CD8-positive, alpha-beta T cell (primary cell): ENCODE measurements at regions of chr7 and their contacts with region 1.

Region 1: DNA sequence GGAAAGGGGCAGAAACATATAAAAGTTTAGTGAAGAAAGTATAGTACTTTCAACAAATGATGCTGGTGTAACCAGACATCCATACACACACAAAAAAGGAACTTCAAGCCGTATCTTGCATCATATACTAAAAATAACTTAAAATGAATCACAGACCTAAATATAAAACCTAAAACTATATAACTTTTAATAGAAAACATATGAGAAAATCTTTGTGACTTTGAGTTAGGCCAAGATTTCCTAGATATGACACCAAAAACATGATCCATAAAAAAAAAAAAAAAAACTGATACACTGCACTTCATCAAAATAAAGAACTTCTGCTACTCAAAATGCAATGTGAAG is 40.9 kb downstream of the NUDCD3 start:
- DNase-seq: no peak
- ATAC-seq: no peak
- H3K4me3 ChIP-seq: no peak overlapping the region
- H3K4me3 Mint-ChIP-seq: no peak overlapping the region
- H3K27ac ChIP-seq: no peak overlapping the region
- H3K27ac Mint-ChIP-seq: peak overlapping the region; percentile 3
- H3K4me1 ChIP-seq: peaks cover 4% of the 10 kb centered on the region
- H3K4me1 Mint-ChIP-seq: peaks cover 71% of the 10 kb centered on the region
- H3K27me3 ChIP-seq: no peaks in the 10 kb centered on the region
- H3K27me3 Mint-ChIP-seq: no peaks in the 10 kb centered on the region
- CTCF ChIP-seq: no peak

Region 2: GRCh38 chr7:44333911-44334733 is 115.4 kb before region 1 on chr7:
- CTCF ChIA-PET with region 1: no interaction called
- POLR2A ChIA-PET with region 1: no interaction called
- intact Hi-C with region 1: no loop called
- DNase-seq: no peak
- ATAC-seq: no peak
- H3K4me3 ChIP-seq: no peak overlapping the region
- H3K4me3 Mint-ChIP-seq: no peak overlapping the region
- H3K27ac ChIP-seq: no peak overlapping the region
- H3K27ac Mint-ChIP-seq: no peak overlapping the region
- H3K4me1 ChIP-seq: no peaks in the 10 kb centered on the region
- H3K4me1 Mint-ChIP-seq: no peaks in the 10 kb centered on the region
- H3K27me3 ChIP-seq: no peaks in the 10 kb centered on the region
- H3K27me3 Mint-ChIP-seq: no peaks in the 10 kb centered on the region
- CTCF ChIP-seq: no peak

Region 3: DNA sequence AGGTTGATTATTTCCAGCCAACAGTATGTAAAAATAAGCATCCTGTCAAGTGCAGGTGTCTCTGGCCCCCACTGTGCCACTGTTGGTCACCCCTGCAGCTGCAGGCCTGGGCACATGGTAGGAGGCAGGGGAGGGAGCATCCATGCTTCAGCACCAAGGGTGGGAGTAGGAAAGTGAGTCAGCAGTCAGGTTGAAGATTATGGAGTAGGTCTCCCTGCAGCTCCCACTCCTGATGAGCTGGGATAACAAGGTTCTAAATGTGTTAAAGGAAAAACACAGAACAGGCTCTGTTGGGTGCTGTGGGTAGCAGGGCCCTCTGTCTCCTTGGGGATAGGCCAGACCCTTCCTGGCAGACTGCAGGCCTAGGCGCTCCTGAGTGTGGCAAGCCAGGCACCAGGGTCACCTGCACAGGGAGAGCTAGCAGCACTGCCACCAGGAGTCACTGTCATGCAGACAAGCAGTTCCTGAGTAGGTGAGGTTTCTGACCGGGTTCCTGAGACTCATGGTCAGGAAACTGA is 18.4 kb before region 1 on chr7:
- CTCF ChIA-PET with region 1: interaction called, 4 read pairs
- POLR2A ChIA-PET with region 1: no interaction called
- intact Hi-C with region 1: loop called in 1 of 2 experiments (anchors 2 kb)
- DNase-seq: peak in 6 of 9 experiments; percentile 7 to 54 (median 40)
- ATAC-seq: peak; percentile 56
- H3K4me3 ChIP-seq: no peak overlapping the region
- H3K4me3 Mint-ChIP-seq: no peak overlapping the region
- H3K27ac ChIP-seq: no peak overlapping the region
- H3K27ac Mint-ChIP-seq: peak overlapping the region; percentile 89
- H3K4me1 ChIP-seq: no peaks in the 10 kb centered on the region
- H3K4me1 Mint-ChIP-seq: peaks cover 53% of the 10 kb centered on the region
- H3K27me3 ChIP-seq: no peaks in the 10 kb centered on the region
- H3K27me3 Mint-ChIP-seq: no peaks in the 10 kb centered on the region
- CTCF ChIP-seq: peak; percentile 50

Region 4: DNA sequence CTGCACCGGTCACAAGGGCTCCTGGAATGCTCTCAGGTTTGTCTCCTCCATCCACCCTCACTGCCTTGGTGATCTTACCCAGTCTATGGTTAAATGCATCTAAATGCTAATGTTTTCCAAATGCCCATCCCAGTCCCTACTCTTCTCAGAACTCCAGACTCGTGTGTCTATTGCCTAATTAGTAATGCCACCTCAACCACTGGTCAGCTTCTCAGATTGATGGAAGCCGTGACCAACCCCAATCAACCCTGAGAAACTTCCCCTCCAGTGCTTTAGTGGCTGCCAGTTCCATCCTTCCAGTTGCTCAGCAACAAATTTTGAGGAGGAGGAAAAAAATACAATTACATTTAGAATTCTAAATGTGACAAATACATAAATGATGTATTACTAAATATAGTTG is 22.3 kb after region 1 on chr7:
- CTCF ChIA-PET with region 1: interaction called, 4 read pairs
- POLR2A ChIA-PET with region 1: no interaction called
- intact Hi-C with region 1: loop called in 1 of 2 experiments (anchors 2 kb)
- DNase-seq: no peak
- ATAC-seq: no peak
- H3K4me3 ChIP-seq: no peak overlapping the region
- H3K4me3 Mint-ChIP-seq: no peak overlapping the region
- H3K27ac ChIP-seq: no peak overlapping the region
- H3K27ac Mint-ChIP-seq: peak overlapping the region; percentile 19
- H3K4me1 ChIP-seq: peaks cover 7% of the 10 kb centered on the region
- H3K4me1 Mint-ChIP-seq: peaks cover 69% of the 10 kb centered on the region
- H3K27me3 ChIP-seq: no peaks in the 10 kb centered on the region
- H3K27me3 Mint-ChIP-seq: no peaks in the 10 kb centered on the region
- CTCF ChIP-seq: no peak